Activated T-helper 2 cell treated with anti-CD3 and anti-CD28 coated beads, Interferon-gamma antibody, Interleukin-2, Interleukin-4, amounts not matched to agents 10 μg/mL and 5 μg/mL and 100 μg/mL, durations not matched to agents 14 hours and 24 hours and 36 hours (primary cell): ENCODE measurements at regions of chr4 and their contacts with region 1.

Region 1: DNA sequence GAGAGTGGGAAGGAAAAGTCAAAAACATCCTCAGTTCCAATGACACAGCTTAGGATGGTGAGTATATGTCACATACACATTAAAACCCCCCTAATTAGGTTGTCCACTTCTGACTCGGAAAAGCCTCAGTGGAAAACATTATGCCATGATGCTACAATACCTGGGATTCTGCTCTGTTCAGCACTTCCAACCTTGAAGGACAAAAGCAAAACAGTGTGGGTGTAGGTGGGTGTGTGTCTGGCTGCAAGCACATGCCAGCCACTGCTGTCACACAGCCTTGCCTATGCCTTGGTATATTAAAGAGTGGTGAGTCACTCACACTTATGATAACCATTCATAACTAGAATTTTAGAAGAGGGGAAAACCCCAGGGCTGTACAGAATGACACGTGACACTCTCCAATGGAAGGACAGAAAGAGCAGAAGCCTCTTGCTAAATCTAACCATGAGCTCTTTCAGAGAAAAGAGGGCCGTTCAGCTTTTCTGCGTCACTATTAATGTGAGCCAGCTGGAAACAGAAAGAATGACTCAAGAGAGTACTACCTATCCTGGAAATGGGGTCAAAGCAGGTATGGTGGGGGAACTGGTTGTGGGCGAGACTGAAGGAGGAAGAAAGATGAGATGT is 159.6 kb downstream of the TET2 start:
- DNase-seq: peak; percentile 47
- H3K4me3 Mint-ChIP-seq: peak overlapping the region; percentile 18
- H3K27ac Mint-ChIP-seq: peak overlapping the region; percentile 74
- H3K4me1 Mint-ChIP-seq: peaks cover 28% of the 10 kb centered on the region
- H3K27me3 Mint-ChIP-seq: no peaks in the 10 kb centered on the region

Region 2: GRCh38 chr4:104966349-104967033 is 339.8 kb before region 1 on chr4:
- intact Hi-C with region 1: loop called (anchors 5 kb)
- DNase-seq: peak; percentile 43
- H3K4me3 Mint-ChIP-seq: peak overlapping the region; percentile 66
- H3K27ac Mint-ChIP-seq: peak overlapping the region; percentile 86
- H3K4me1 Mint-ChIP-seq: peaks cover 39% of the 10 kb centered on the region
- H3K27me3 Mint-ChIP-seq: peaks cover 4% of the 10 kb centered on the region

Region 3: GRCh38 chr4:105135785-105136184 is 170.5 kb before region 1 on chr4:
- intact Hi-C with region 1: loop called (anchors 2 kb)
- DNase-seq: no peak
- H3K4me3 Mint-ChIP-seq: no peak overlapping the region
- H3K27ac Mint-ChIP-seq: no peak overlapping the region
- H3K4me1 Mint-ChIP-seq: peaks cover 12% of the 10 kb centered on the region
- H3K27me3 Mint-ChIP-seq: no peaks in the 10 kb centered on the region

Region 4: GRCh38 chr4:105215609-105216313 is 90.5 kb before region 1 on chr4:
- intact Hi-C with region 1: loop called (anchors 1 kb)
- DNase-seq: no peak
- H3K4me3 Mint-ChIP-seq: no peak overlapping the region
- H3K27ac Mint-ChIP-seq: peak overlapping the region; percentile 63
- H3K4me1 Mint-ChIP-seq: peaks cover 25% of the 10 kb centered on the region
- H3K27me3 Mint-ChIP-seq: no peaks in the 10 kb centered on the region

Region 5: DNA sequence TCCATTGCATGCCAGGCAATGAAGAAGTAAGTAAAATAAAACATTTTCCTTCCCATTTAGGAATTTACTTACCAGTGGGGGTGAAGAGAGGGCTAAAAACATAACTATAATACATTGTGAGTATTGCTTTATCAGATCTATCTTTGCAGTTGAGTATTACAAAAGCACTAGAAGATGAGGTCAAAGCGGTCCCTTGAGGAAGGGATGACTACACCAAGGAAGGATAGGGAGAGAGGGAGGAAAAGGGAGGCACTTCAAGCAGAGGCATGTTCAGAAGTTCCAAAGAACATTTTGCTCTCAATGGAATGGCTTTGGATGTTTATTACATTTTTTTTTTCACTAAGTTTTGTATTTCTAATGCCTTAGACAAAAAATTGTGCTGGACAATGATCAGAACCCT is 31.8 kb before region 1 on chr4:
- intact Hi-C with region 1: loop called (anchors 1 kb)
- DNase-seq: no peak
- H3K4me3 Mint-ChIP-seq: no peak overlapping the region
- H3K27ac Mint-ChIP-seq: peak overlapping the region; percentile 60
- H3K4me1 Mint-ChIP-seq: peaks cover 38% of the 10 kb centered on the region
- H3K27me3 Mint-ChIP-seq: no peaks in the 10 kb centered on the region

Region 6: DNA sequence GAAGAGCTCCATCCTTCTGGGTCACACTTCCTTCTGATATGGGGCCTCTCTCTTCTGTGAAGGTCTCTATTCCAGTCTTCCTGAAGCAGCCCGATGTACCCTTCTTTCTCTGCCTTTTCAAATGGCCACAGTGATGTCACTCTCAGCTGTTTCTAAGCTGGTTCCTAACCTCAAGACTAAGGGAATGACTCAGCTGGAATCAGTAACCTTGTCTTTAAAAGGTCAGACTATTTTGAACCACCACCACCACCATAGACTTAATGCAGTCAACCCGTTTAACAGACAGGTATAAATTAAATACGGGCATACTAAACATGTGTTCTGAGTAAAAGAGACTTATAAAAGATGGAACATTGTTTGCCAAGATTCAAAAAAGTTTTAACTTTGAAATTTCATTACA is 46.6 kb after region 1 on chr4:
- intact Hi-C with region 1: loop called (anchors 2 kb)
- DNase-seq: no peak
- H3K4me3 Mint-ChIP-seq: no peak overlapping the region
- H3K27ac Mint-ChIP-seq: no peak overlapping the region
- H3K4me1 Mint-ChIP-seq: peaks cover 19% of the 10 kb centered on the region
- H3K27me3 Mint-ChIP-seq: no peaks in the 10 kb centered on the region

Region 7: DNA sequence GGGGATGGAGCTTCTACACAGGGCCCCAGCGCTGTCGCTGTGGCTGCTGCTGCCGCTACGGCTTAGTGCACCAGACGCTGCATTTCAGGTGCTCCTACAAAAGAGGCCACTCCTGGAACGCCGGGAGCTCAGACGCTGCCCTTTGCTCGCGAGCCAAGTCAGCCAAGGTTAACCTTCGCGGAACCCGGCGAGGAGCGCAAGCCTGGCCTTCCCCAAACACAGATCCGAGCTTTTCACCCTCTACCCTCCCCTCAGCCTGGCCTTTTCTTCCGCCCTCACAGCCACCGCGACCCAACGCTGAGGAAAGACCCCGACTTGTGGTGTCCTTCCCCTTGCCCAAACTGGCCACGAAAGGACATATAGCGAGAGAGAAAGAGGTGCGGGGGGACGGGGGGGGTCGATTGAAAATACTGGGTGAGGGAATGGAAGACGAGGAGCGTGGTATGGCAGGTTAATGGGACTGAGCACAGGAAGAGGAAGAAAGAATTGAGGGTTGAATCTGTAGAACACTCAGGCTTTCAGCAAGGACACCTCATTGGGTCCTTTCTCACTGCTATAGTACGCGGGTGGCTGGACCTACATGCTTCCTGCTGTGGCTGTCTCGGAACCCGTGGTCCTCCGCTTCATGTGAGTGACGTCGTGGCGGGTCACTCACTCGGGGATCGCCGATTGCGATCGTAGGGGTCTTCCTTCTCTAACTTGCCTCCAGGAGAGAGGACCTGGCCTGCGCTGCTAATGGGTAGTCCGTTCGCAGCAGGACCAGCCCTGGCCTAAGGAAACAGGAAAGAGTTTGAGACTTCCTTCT is 1009.9 kb after region 1 on chr4 and contains the starts of genes AIMP1 and TBCK:
- intact Hi-C with region 1: loop called (anchors 10 kb)
- DNase-seq: peak; percentile 84
- H3K4me3 Mint-ChIP-seq: no peak within 1 kb of the TSS
- H3K27ac Mint-ChIP-seq: peak within 1 kb of the TSS; percentile 91
- H3K4me1 Mint-ChIP-seq: peaks cover 23% of the 10 kb centered on the region
- H3K27me3 Mint-ChIP-seq: no peaks in the 10 kb centered on the region
- total RNA-seq, gene AIMP1: 72.1 and 72.5 TPM in 2 replicates
- total RNA-seq, gene TBCK: 28.5 and 29.8 TPM in 2 replicates